ENCODE measurements at regions of chr15 and their contacts with region 1.

Region 1: DNA sequence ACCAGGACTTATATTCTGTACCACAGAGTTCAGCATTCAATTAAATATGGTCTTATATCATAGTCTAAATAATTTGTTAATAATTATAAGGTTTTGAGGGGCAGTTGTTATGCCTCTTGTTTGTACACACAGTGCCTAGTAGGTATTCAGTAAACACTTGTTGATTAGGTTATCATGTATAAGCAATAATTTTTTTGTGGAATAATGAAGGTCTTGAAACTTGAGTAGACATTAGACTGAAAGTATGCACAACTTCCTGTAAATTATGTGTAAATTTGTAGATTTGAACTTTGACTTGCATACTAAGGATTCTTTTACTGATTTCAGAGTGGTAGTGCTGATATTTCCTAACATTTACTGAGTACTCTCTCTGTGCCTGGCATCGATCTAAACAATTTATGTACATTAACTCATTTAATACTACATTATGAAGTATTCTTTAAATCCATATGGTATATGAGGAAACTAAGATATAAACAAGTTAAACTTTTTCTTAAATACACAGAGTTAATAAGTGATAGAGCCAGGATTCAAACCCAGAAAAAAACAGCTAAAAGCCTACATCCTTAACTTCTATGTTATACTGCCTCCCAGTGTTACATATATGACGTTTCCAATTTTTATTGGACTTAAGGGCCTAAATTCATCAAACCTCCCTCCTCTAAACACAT is 65.1 kb downstream of the GLCE start:
- DNase-seq: peak; percentile 67
- ATAC-seq: peak; percentile 71
- H3K4me3 ChIP-seq: no peak overlapping the region
- H3K27ac ChIP-seq: no peak overlapping the region
- H3K4me1 ChIP-seq: no peaks in the 10 kb centered on the region; the same call in 1 of the 2 replicates
- H3K27me3 ChIP-seq: no peaks in the 10 kb centered on the region
- CTCF ChIP-seq: peak; percentile 70
- POLR2A ChIP-seq: no peak
- RAD21 ChIP-seq: peak; percentile 72

Region 2: DNA sequence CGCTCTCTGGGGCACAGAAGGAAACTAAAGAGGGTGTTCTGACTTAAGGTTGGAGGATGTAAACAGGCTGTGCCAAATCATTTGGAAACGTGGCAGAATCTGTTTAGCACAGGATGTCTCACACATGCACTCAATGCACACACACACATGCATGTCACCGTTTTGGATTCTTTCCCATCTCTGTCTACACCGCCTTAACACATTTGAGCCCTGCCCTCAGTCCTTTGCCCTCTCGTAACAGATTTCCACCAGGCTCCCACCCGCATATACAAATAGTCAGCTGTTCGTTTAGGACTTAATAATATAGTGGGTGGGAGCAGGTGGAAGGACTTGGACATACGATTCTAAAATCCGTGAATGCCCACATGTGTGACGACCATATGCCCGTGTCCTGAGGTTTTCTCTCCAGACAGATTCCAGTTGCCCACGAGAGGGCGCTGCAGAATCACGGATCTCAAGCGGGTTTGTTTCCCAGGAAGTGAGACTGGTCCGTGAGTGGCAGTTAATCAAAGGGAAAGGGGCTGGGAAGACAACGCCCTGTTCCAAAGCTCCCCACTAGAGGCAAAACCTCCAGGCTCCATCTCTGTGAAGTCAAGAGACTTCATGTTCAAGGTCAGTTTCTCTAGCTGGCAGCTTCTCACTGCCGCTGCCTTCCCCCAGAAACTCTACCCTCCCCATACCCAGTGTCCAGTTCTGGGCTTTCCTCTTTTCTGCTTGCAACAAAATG is 166.5 kb before region 1 on chr15:
- CTCF ChIA-PET with region 1: interaction called, 4 read pairs
- POLR2A ChIA-PET with region 1: no interaction called
- dilution Hi-C with region 1: no loop called
- in situ Hi-C with region 1: no loop called
- intact Hi-C with region 1: loop called (anchors 1 kb)
- DNase-seq: peak; percentile 81
- ATAC-seq: peak; percentile 92
- H3K4me3 ChIP-seq: no peak overlapping the region
- H3K27ac ChIP-seq: no peak overlapping the region
- H3K4me1 ChIP-seq: no peaks in the 10 kb centered on the region; the same call in 1 of the 2 replicates
- H3K27me3 ChIP-seq: peaks cover 29% of the 10 kb centered on the region
- CTCF ChIP-seq: peak; percentile 88
- POLR2A ChIP-seq: peak; percentile 37
- RAD21 ChIP-seq: peak; percentile 98

Region 3: DNA sequence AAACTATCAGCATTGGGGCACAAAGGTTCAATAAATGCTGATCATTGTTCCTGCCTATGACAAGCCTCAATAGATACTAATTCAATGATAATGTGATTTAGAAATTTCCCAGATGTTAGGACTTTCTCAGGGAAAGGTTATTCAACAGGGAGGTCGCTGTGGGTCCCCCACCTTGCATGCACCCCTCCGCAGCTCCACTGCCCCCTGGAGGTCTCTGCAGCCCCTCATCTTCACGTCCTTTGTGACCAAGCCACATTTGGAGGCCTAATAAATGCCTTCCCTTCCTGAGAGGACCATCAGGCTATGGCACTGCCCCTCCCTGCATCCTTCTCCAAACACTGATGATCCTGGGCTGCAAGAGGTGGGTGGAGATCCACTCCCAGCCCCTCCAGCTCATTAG is 160.8 kb before region 1 on chr15:
- CTCF ChIA-PET with region 1: interaction called, 4 read pairs
- POLR2A ChIA-PET with region 1: no interaction called
- dilution Hi-C with region 1: no loop called
- in situ Hi-C with region 1: loop called (anchors 5 kb)
- intact Hi-C with region 1: loop called (anchors 1 kb)
- DNase-seq: no peak
- ATAC-seq: no peak
- H3K4me3 ChIP-seq: no peak overlapping the region
- H3K27ac ChIP-seq: no peak overlapping the region
- H3K4me1 ChIP-seq: no peaks in the 10 kb centered on the region
- H3K27me3 ChIP-seq: peaks cover 4% of the 10 kb centered on the region; the same call in 1 of the 2 replicates
- CTCF ChIP-seq: no peak
- POLR2A ChIP-seq: no peak
- RAD21 ChIP-seq: no peak

Region 4: GRCh38 chr15:69181424-69181823 is 44.1 kb before region 1 on chr15:
- CTCF ChIA-PET with region 1: no interaction called
- POLR2A ChIA-PET with region 1: no interaction called
- dilution Hi-C with region 1: no loop called
- in situ Hi-C with region 1: no loop called
- intact Hi-C with region 1: no loop called
- DNase-seq: peak; percentile 34
- ATAC-seq: no peak
- H3K4me3 ChIP-seq: no peak overlapping the region
- H3K27ac ChIP-seq: no peak overlapping the region
- H3K4me1 ChIP-seq: no peaks in the 10 kb centered on the region
- H3K27me3 ChIP-seq: no peaks in the 10 kb centered on the region
- CTCF ChIP-seq: no peak
- POLR2A ChIP-seq: no peak
- RAD21 ChIP-seq: no peak

Measured in IMR-90 (cell line).